Activated naive CD4-positive, alpha-beta T cell treated with anti-CD3 and anti-CD28 coated beads, Interleukin-2, amount 10 ng/mL, durations not matched to agents 7 days and 5 days (primary cell): ENCODE measurements at regions of chr14 and their contacts with region 1.

Region 1: DNA sequence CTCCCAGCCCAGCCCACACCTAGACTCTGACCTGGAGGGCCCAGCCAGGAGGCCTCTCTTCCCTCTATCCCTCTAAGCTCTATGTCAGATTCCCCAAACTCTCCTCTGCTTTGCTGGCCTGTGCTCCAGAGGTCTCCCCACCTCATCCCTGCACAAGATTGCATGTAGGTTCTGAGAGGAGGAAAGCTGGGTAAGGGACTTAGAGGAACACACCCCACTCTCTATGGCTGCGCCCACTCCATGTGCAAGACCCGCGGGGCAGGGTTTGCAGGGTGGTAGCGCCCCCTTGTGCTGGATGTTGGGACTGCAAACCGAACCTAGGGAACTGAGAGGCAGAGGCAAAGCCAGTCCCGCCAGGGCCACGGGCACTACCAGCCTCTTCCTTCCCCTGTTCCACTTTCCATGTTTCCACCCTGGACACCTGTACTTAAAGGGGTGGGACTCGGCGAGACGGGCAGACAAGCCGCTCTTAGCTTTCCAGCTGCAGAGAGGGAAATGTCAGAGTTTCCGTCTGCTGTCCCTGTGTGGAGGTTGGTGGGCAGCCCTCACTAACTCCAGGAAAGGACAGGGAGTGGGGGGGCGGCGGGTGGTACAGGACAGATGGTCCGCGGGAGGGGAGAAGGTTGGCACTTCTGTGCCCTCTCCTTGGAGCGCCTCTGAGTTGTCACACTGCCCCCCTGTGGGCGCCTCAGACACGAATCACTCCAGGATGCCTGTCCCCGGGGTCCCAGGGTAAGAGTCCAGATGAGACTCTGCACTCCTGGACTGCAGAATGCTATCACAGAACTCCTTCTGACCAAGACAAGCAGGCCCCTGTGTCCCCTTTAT is 16.8 kb downstream of the MMP14 start:
- DNase-seq: peak; percentile 93
- H3K4me3 Mint-ChIP-seq: peak overlapping the region; percentile 72
- H3K27ac Mint-ChIP-seq: peak overlapping the region; percentile 49
- H3K4me1 Mint-ChIP-seq: peaks cover 39% of the 10 kb centered on the region
- H3K27me3 Mint-ChIP-seq: peaks cover 77% of the 10 kb centered on the region

Region 2: GRCh38 chr14:22653012-22653621 is 200.0 kb before region 1 on chr14:
- CTCF ChIA-PET with region 1: interaction called, 31 read pairs
- DNase-seq: peak; percentile 70
- H3K4me3 Mint-ChIP-seq: no peak overlapping the region
- H3K27ac Mint-ChIP-seq: no peak overlapping the region
- H3K4me1 Mint-ChIP-seq: no peaks in the 10 kb centered on the region
- H3K27me3 Mint-ChIP-seq: no peaks in the 10 kb centered on the region

Region 3: GRCh38 chr14:22829661-22830442 is 23.3 kb before region 1 on chr14 and contains the start of gene MRPL52:
- CTCF ChIA-PET with region 1: interaction called, 224 read pairs
- DNase-seq: peak; percentile 93
- H3K4me3 Mint-ChIP-seq: peak within 1 kb of the TSS; percentile 90
- H3K27ac Mint-ChIP-seq: peak within 1 kb of the TSS; percentile 92
- H3K4me1 Mint-ChIP-seq: peaks cover 40% of the 10 kb centered on the region
- H3K27me3 Mint-ChIP-seq: peaks cover 3% of the 10 kb centered on the region

Region 4: DNA sequence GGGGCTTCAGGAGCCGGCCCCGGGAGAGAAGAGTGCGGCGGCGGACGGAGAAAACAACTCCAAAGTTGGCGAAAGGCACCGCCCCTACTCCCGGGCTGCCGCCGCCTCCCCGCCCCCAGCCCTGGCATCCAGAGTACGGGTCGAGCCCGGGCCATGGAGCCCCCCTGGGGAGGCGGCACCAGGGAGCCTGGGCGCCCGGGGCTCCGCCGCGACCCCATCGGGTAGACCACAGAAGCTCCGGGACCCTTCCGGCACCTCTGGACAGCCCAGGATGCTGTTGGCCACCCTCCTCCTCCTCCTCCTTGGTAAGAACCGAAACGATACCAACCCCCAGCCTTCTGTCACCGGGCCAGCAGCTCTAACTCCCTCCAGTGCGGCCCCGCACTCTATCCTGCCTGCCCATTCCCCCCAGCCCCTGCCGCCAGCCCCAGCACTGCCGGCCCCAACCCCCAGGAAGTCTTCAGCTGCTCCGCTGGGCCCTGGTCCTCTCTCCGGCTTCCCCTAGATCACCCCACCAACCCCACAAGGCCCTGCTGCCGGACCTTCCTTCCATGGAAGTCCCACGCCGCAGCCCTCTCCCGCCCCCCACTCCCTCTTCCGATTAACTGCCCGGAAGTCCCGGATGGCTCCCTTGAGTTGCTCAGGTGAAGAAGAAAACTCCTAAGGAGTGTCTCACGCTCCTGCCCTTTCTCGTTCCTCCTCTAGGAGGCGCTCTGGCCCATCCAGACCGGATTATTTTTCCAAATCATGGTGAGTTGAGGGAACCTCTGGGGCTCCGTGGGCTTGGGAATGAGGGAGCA is 19.1 kb after region 1 on chr14:
- CTCF ChIA-PET with region 1: interaction called, 16 read pairs
- DNase-seq: peak; percentile 82
- H3K4me3 Mint-ChIP-seq: peak overlapping the region; percentile 95
- H3K27ac Mint-ChIP-seq: peak overlapping the region; percentile 97
- H3K4me1 Mint-ChIP-seq: peaks cover 37% of the 10 kb centered on the region
- H3K27me3 Mint-ChIP-seq: no peaks in the 10 kb centered on the region